Caco-2 (cell line): ENCODE measurements at regions of chr1 and their contacts with region 1.

Region 1: GRCh38 chr1:222643938-222644635 is 26.2 kb downstream of the MIA3 start:
- DNase-seq: peak; percentile 99
- H3K4me3 ChIP-seq: peak overlapping the region; percentile 65
- H3K4me3 Mint-ChIP-seq: peak overlapping the region; percentile 79
- H3K27ac Mint-ChIP-seq: peak overlapping the region; percentile 92
- H3K4me1 ChIP-seq: 0 out of 2 replicates have a peak, but pooled peaks cover 5% of the 10 kb centered on the region
- H3K4me1 Mint-ChIP-seq: no peaks in the 10 kb centered on the region
- H3K27me3 ChIP-seq: no peaks in the 10 kb centered on the region
- H3K27me3 Mint-ChIP-seq: no peaks in the 10 kb centered on the region
- CTCF ChIP-seq: no peak

Region 2: GRCh38 chr1:222589462-222590302 is 54.4 kb before region 1 on chr1 and contains the start of gene TAF1A:
- CTCF ChIA-PET with region 1: no interaction called
- POLR2A ChIA-PET with region 1: interaction called, 9 read pairs
- intact Hi-C with region 1: loop called (anchors 2 kb)
- DNase-seq: peak; percentile 85 to 89
- H3K4me3 ChIP-seq: peak within 1 kb of the TSS; percentile 66
- H3K4me3 Mint-ChIP-seq: peak within 1 kb of the TSS; percentile 92
- H3K27ac Mint-ChIP-seq: peak within 1 kb of the TSS; percentile 92
- H3K4me1 ChIP-seq: peaks cover 11% of the 10 kb centered on the region; the same call in 1 of the 2 replicates
- H3K4me1 Mint-ChIP-seq: peaks cover 20% of the 10 kb centered on the region
- H3K27me3 ChIP-seq: no peaks in the 10 kb centered on the region
- H3K27me3 Mint-ChIP-seq: no peaks in the 10 kb centered on the region
- CTCF ChIP-seq: no peak
- total RNA-seq, gene TAF1A: 14.8 and 15.9 TPM in 2 replicates

Region 3: GRCh38 chr1:222617367-222617951 is 26.6 kb before region 1 on chr1:
- CTCF ChIA-PET with region 1: no interaction called
- POLR2A ChIA-PET with region 1: no interaction called
- intact Hi-C with region 1: loop called (anchors 2 kb)
- DNase-seq: peak; percentile 90 to 94
- H3K4me3 ChIP-seq: peak overlapping the region; percentile 44
- H3K4me3 Mint-ChIP-seq: peak overlapping the region; percentile 85
- H3K27ac Mint-ChIP-seq: peak overlapping the region; percentile 78
- H3K4me1 ChIP-seq: 0 out of 2 replicates have a peak, but pooled peaks cover 6% of the 10 kb centered on the region
- H3K4me1 Mint-ChIP-seq: peaks cover 6% of the 10 kb centered on the region
- H3K27me3 ChIP-seq: no peaks in the 10 kb centered on the region
- H3K27me3 Mint-ChIP-seq: peaks cover 16% of the 10 kb centered on the region
- CTCF ChIP-seq: no peak

Region 4: GRCh38 chr1:222654849-222655248 is 10.8 kb after region 1 on chr1:
- CTCF ChIA-PET with region 1: no interaction called
- POLR2A ChIA-PET with region 1: no interaction called
- intact Hi-C with region 1: no loop called
- DNase-seq: no peak
- H3K4me3 ChIP-seq: no peak overlapping the region
- H3K4me3 Mint-ChIP-seq: no peak overlapping the region
- H3K27ac Mint-ChIP-seq: no peak overlapping the region
- H3K4me1 ChIP-seq: no peaks in the 10 kb centered on the region
- H3K4me1 Mint-ChIP-seq: no peaks in the 10 kb centered on the region
- H3K27me3 ChIP-seq: no peaks in the 10 kb centered on the region
- H3K27me3 Mint-ChIP-seq: no peaks in the 10 kb centered on the region
- CTCF ChIP-seq: no peak

Region 5: GRCh38 chr1:222713091-222713961 is 69.2 kb after region 1 on chr1:
- CTCF ChIA-PET with region 1: no interaction called
- POLR2A ChIA-PET with region 1: interaction called, 6 read pairs
- intact Hi-C with region 1: loop called (anchors 1 kb)
- DNase-seq: peak; percentile 93 to 95
- H3K4me3 ChIP-seq: peak overlapping the region; percentile 78
- H3K4me3 Mint-ChIP-seq: peak overlapping the region; percentile 99
- H3K27ac Mint-ChIP-seq: peak overlapping the region; percentile 97
- H3K4me1 ChIP-seq: peaks cover 3% of the 10 kb centered on the region; the same call in 1 of the 2 replicates
- H3K4me1 Mint-ChIP-seq: no peaks in the 10 kb centered on the region
- H3K27me3 ChIP-seq: no peaks in the 10 kb centered on the region
- H3K27me3 Mint-ChIP-seq: no peaks in the 10 kb centered on the region
- CTCF ChIP-seq: no peak